ENCODE measurements at regions of chr9 and their contacts with region 1.

Region 1: GRCh38 chr9:93682232-93682968 is 106.0 kb downstream of the PHF2 start:
- DNase-seq: peak; percentile 47 to 89
- H3K4me3 ChIP-seq: no peak overlapping the region
- CTCF ChIP-seq: no peak
- POLR2A ChIP-seq: no peak

Region 2: GRCh38 chr9:92992549-92992948 is 689.9 kb before region 1 on chr9:
- intact Hi-C with region 1: no loop called
- DNase-seq: peak in 1 of 2 donors; percentile 73
- H3K4me3 ChIP-seq: no peak overlapping the region
- CTCF ChIP-seq: no peak
- POLR2A ChIP-seq: no peak

Region 3: DNA sequence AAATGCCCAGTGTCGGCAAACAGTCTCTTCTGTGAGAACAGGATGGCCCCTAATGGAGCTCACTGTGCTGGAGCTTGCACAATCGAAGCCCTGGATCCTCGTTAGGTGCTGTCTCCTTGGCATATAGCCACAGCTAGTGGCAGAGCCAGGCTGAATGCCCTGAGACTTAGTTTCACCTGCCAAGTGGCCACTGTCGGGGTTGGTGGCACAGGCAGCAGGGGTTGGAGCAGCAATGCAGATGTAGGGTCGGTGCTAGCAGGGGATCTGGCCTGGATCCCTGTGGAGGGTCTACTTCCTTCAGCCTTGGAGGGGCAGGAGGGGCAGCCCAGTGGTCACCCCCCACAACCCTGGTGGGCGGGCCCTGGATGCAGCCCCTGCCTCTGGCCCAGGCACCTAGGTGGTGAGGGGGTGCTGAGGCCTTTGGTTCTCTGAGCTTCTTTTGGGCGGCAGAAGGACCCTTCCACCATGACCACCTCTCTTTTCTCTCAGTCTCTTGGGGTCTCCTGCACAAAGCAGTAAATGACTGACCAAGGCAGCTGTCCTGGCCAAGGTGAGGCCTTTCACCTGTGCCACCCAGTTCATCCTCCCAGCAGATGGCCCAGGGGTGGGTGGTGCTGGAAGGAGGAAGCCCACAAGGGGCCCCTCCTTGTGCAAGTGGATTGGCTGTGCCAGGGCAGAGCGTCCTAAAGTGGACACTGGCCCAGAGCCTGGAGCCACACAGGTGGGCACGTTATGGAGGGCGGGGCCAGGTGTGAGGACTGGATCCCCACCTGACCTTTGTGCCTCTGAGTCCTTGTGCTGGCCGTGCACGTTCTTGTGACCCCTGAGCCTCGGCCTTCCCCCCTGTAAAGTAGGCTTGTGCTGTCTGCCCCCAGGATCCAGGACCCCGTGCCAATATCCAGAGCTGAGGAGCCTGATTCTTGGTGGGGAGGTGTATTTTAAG is 61.3 kb before region 1 on chr9:
- intact Hi-C with region 1: loop called (anchors 10 kb)
- DNase-seq: peak in 1 of 2 donors; percentile 68
- H3K4me3 ChIP-seq: no peak overlapping the region
- CTCF ChIP-seq: no peak
- POLR2A ChIP-seq: no peak

Region 4: DNA sequence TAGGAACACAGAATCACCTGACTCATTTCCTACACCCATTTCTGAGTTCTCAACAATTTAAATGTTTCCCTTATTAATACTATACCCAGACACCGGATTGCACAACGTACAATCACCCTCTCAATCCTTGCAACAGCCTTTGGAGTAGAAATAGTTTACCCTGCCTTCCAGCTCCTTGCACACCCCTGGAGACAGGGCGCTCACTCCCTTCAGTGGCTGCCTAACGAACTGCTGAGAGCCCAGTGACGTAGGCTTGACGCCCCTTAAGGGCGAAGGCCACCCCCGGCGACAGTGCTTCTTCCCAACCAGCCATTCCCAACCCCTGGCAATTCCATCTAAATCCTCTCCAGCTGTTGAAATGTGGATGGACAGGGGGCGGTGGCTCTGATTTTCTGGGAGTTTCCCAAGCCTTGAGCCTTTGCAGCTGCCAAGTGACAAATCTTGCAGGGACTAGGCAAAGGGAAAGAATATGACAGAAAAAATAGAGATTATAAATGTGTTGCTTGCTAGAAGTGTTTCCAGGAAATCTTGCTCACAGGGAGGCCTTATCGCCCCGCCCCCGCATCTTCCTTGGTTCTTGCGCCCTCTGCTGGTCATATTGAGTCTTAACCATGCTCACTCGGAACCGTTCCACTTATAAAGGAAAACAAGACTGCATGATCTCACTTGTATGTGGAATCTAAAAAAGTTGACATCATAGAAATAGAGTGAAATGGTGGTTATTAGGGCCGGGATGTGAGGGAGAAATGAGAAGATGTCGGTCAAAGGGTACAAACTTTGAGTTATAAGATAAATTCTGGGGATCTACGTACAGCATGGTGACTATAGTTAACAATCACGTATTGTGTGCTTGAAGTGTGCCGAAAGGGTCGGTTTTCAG is 280.4 kb after region 1 on chr9:
- intact Hi-C with region 1: loop called (anchors 5 kb)
- DNase-seq: peak; percentile 82 to 96
- H3K4me3 ChIP-seq: no peak overlapping the region
- CTCF ChIP-seq: peak in 1 of 3 donors; percentile 77
- POLR2A ChIP-seq: no peak

Region 5: GRCh38 chr9:94139672-94140417 is 457.4 kb after region 1 on chr9:
- intact Hi-C with region 1: no loop called
- DNase-seq: peak; percentile 85 to 96
- H3K4me3 ChIP-seq: no peak overlapping the region
- CTCF ChIP-seq: no peak
- POLR2A ChIP-seq: no peak